ENCODE measurements at regions of chr1 and their contacts with region 1.

Region 1: DNA sequence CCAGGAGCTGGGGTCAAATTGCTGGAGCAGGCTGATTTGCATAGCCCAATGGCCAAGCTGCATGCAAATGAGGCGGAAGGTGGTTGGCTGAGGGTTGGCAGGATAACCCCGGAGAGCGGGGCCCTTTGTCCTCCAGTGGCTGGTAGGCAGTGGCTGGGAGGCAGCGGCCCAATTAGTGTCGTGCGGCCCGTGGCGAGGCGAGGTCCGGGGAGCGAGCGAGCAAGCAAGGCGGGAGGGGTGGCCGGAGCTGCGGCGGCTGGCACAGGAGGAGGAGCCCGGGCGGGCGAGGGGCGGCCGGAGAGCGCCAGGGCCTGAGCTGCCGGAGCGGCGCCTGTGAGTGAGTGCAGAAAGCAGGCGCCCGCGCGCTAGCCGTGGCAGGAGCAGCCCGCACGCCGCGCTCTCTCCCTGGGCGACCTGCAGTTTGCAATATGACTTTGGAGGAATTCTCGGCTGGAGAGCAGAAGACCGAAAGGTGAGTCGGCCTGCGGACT is at the start of gene GADD45A:
- DNase-seq: peak; percentile 97
- H3K27ac ChIP-seq: peak within 1 kb of the TSS; percentile 100
- CTCF ChIP-seq: no peak

Region 2: GRCh38 chr1:67561704-67562113 is 123.4 kb before region 1 on chr1:
- CTCF ChIA-PET with region 1: interaction called, 16 read pairs
- POLR2A ChIA-PET with region 1: interaction called, 3 read pairs
- DNase-seq: peak; percentile 76
- H3K27ac ChIP-seq: peak overlapping the region; percentile 59
- CTCF ChIP-seq: peak; percentile 90

Region 3: DNA sequence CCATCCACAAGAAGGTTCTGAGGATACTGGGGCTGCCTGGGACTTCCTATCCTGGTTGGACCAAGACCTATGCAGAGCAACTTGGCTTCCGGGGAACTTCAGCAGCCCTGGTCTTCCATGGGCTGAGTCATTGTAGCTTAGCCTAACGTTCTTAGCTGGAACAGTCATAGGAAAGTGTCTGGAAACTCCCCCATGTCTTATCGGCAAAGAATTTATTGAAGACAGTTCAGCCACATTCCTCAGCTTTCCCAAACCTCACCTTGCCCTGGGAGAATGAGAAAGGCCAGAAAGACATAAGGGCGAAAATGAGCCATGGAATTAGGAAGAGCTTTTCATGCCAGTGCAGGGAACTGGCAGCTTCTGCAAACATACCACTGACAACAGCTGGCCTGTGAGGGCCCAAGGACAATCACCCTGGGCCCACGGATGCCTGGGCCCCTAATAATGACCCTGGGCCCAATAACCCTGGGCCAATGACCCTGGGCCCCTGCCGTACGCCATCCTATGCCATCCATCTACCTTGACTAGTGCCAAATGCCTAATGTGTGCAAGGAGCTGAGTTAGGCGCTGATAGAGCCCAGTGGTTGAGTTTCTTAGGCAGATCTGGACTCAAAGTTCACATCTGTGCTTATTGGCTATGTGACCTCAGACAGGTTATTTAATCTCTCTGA is 114.5 kb before region 1 on chr1:
- CTCF ChIA-PET with region 1: interaction called, 3 read pairs
- POLR2A ChIA-PET with region 1: interaction called, 33 read pairs
- DNase-seq: peak; percentile 91
- H3K27ac ChIP-seq: peak overlapping the region; percentile 95
- CTCF ChIP-seq: no peak

Region 4: DNA sequence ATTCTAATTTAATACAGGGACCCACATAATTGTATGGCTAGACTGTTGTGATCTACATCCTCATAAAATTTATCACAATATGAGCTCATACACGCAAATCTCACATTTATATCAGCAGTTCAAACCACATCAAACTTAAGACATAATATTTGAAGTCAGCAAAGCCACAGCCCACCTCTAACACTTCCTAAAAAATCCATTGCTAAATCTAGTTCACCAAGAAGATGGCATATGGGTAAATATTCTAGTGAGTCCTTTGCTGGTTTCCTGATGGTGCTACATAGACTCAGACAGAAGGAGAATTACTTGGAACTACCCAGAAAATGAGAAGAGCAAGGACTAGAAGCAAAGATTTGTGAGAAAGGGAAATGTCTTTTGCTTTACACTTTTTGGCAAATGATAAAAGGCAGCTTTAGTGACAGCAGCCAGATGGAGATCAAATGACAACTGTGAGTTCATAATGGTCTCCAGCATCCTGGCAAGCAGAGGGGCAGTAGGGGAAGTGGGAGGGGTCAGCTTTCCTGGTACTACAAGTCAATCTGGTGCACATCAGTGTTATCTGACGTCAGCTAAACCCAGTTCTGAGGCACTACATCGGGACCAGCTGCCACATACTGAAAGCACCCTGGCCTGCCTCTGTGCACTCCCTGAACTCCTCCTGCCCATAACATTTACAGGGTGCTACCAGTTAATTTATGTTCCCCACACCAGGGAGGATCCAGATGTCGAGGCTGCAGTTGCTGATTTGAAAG is 10.7 kb before region 1 on chr1:
- CTCF ChIA-PET with region 1: no interaction called
- POLR2A ChIA-PET with region 1: no interaction called
- DNase-seq: no peak
- H3K27ac ChIP-seq: no peak overlapping the region
- CTCF ChIP-seq: no peak